ENCODE measurements at regions of chr2 and their contacts with region 1.

Region 1: GRCh38 chr2:237865623-237866041 is 6.2 kb downstream of the RAMP1 start:
- DNase-seq: no peak
- H3K4me3 ChIP-seq: no peak overlapping the region
- H3K27ac ChIP-seq: no peak overlapping the region
- H3K4me1 ChIP-seq: peaks cover 5% of the 10 kb centered on the region
- H3K27me3 ChIP-seq: peaks cover 7 to 10% of the 10 kb centered on the region in 2 experiments
- CTCF ChIP-seq: no peak
- POLR2A ChIP-seq: no peak

Region 2: DNA sequence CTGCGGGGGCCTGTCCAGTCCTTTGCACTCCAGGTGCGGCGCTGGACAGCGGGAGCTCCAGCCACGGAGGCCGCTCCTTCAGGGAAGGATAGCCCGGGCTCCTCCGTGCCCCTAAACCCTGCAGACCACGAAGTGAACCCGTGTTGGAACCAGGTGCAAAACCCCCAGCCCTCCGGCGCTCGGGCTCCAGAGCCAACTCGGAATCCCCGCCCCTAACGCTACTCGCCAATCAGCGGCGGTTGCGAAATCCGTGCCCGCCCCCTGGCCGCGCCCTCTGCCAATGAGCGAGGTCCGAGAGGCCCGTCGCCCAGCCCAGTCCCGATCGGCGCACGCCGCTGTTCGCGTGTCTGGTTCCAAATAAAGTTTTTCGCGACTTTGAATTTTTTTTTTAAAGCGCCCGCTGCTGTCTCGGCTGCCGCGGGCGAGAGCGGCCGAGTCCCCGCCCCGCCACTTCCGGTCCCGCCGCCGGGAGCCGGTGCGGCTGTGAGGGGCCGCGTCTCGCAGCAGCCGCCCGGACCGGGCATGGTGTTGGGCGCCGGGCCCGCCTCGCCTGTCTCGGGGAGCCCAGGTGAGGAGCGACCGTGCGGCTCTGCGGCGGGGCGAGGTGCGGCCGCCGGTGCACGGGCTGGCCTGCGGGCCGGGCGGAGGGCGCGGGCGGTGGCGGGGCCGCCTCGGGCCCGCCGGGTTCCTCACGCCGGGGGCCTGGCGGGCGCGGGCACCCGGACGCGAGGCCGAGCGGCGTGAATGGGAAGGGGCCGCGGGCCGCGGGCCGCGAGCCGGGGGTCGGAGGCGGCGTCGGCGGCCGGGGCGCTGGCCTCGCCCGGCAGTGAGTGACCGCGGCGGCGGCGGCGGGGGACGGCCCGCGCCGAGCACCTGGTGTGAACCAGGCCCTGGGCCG is 101.2 kb after region 1 on chr2 and contains the start of gene UBE2F:
- CTCF ChIA-PET with region 1: no interaction called
- POLR2A ChIA-PET with region 1: no interaction called
- dilution Hi-C with region 1: no loop called
- intact Hi-C with region 1: loop called (anchors 2 kb)
- DNase-seq: peak; percentile 96
- H3K4me3 ChIP-seq: peak within 1 kb of the TSS; percentile 40 to 65 (median 63)
- H3K27ac ChIP-seq: no peak within 1 kb of the TSS
- H3K4me1 ChIP-seq: peaks cover 10% of the 10 kb centered on the region
- H3K27me3 ChIP-seq: no peaks in the 10 kb centered on the region
- CTCF ChIP-seq: no peak
- POLR2A ChIP-seq: peak; percentile 73
- total RNA-seq, gene UBE2F: 42.3 and 47.4 TPM in 2 replicates

Measured in endothelial cell of umbilical vein (primary cell).